WTC11 (cell line): ENCODE measurements at regions of chr19 and their contacts with region 1.

Region 1: GRCh38 chr19:47863514-47863936 is 4.5 kb downstream of the TPRX2 start:
- DNase-seq: peak; percentile 98
- ATAC-seq: peak; percentile 93
- H3K4me3 Mint-ChIP-seq: peak overlapping the region; percentile 45
- H3K27ac Mint-ChIP-seq: peak overlapping the region; percentile 80; the same call in 1 of the 2 replicates
- H3K4me1 Mint-ChIP-seq: peaks cover 21% of the 10 kb centered on the region
- H3K27me3 Mint-ChIP-seq: no peaks in the 10 kb centered on the region
- CTCF ChIP-seq: peak; percentile 97

Region 2: DNA sequence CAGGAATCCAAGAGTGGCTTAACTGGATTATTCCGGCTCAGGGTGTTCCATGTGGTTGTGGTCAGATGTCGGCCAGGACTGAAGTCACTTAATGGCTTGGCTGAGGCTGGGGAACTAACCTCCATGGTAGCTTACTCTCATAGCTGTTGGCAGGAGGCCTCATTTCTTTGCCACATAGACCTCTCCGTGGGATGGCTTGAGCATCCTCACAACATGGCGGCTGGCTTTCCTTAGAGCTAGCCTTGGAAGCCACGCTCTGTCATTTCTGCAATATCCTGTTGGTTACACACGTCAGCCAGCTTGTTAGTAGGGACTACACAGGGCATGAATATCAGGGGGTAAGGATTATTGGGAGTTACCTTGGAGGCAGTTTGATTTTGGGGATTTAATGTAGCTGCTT is 36.7 kb before region 1 on chr19:
- CTCF ChIA-PET with region 1: interaction called, 20 read pairs
- POLR2A ChIA-PET with region 1: no interaction called
- DNase-seq: no peak
- ATAC-seq: no peak
- H3K4me3 Mint-ChIP-seq: no peak overlapping the region
- H3K27ac Mint-ChIP-seq: no peak overlapping the region
- H3K4me1 Mint-ChIP-seq: peaks cover 17% of the 10 kb centered on the region
- H3K27me3 Mint-ChIP-seq: peaks cover 3% of the 10 kb centered on the region; the same call in 1 of the 2 replicates
- CTCF ChIP-seq: no peak

Region 3: DNA sequence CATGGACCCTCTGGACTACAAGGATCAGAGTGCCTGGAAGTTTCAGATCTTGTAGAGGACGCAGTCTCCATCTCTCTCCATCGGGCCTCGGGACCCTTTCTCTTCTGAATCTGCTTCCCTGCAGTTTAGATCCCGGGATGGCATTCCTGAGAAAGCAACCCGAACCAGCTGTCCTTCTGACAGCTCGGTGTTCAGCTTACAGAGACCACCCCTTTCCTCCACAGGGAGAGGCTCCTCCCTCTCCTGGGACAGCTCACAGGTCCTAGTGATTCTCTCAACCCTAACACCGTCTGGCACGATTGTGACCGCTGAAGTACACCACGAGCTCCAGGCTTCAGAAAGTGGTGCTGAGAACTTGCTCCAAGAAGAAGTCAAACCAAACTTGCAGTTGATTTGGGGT is 23.6 kb before region 1 on chr19:
- CTCF ChIA-PET with region 1: interaction called, 14 read pairs
- POLR2A ChIA-PET with region 1: no interaction called
- DNase-seq: peak; percentile 56
- ATAC-seq: peak; percentile 97
- H3K4me3 Mint-ChIP-seq: peak overlapping the region; percentile 33; the same call in 1 of the 2 replicates
- H3K27ac Mint-ChIP-seq: peak overlapping the region; percentile 92
- H3K4me1 Mint-ChIP-seq: peaks cover 26% of the 10 kb centered on the region
- H3K27me3 Mint-ChIP-seq: no peaks in the 10 kb centered on the region; the same call in 1 of the 2 replicates
- CTCF ChIP-seq: no peak

Region 4: DNA sequence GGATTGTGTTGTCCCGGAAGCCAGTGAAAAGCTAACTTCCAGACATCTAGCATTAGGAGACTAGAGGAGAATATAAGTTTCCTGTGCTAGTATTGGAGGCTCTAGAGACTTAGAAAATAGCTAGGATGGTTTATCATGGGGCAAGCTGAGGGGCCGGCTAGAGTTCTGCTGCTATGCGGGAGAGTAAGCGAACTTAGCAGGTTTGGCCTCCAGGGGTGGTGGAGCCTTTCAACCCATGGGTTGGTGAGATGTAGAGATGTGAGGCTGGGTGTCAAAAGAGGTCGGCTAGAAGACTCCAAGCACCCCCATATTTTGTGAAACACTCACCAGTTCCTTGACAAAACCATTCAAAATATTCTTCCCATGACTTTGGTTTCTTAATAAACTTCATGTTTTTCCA is 18.2 kb after region 1 on chr19:
- CTCF ChIA-PET with region 1: interaction called, 10 read pairs
- POLR2A ChIA-PET with region 1: no interaction called
- DNase-seq: peak; percentile 21
- ATAC-seq: no peak
- H3K4me3 Mint-ChIP-seq: no peak overlapping the region
- H3K27ac Mint-ChIP-seq: no peak overlapping the region
- H3K4me1 Mint-ChIP-seq: peaks cover 6% of the 10 kb centered on the region; the same call in 1 of the 2 replicates
- H3K27me3 Mint-ChIP-seq: no peaks in the 10 kb centered on the region
- CTCF ChIP-seq: no peak

Region 5: DNA sequence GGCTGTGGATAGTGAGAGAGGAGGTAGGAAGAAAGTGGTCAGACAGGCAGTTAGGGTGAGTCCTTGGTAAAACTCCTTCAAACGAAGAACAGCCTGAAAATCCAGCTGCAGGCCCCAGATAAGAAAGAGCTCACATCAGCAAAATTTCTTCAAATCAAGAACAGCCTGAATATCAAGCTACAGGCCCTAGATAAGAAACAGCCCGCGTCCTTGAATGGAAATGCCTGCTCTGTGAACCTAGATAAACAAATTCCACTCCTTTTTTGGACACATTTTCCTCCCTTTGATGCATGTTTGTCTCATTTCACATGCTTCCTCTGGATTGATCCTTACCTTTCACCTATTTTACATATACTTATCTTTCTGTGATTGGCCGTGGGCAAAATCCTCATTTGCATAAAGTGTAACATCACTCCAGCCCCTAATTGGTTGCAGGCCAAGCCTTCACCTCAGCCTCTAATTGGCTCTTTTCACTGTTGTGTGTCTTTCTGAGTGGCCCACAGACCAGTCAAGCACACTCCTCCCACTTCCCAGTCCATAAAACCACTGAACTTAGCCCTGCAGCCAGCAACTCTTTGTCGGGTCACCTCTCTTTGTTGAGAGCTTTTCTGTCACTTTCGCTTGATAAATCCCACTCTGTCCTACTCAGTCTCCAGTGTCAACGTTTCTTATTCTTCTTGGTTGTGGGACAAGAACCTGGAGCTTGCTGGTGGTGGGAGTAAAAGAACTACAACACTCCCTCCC is 28.6 kb after region 1 on chr19:
- CTCF ChIA-PET with region 1: interaction called, 11 read pairs
- POLR2A ChIA-PET with region 1: no interaction called
- DNase-seq: no peak
- ATAC-seq: peak; percentile 51
- H3K4me3 Mint-ChIP-seq: no peak overlapping the region
- H3K27ac Mint-ChIP-seq: 0 out of 2 replicates have a peak overlapping the region, but pooled peaks have one; percentile 1
- H3K4me1 Mint-ChIP-seq: no peaks in the 10 kb centered on the region
- H3K27me3 Mint-ChIP-seq: no peaks in the 10 kb centered on the region
- CTCF ChIP-seq: no peak